Activated T-helper 2 cell treated with anti-CD3 and anti-CD28 coated beads, Interferon-gamma antibody, Interleukin-2, Interleukin-4, amounts not matched to agents 10 μg/mL and 5 μg/mL and 100 μg/mL, durations not matched to agents 14 hours and 24 hours and 36 hours (primary cell): ENCODE measurements at regions of chr12 and their contacts with region 1.

Region 1: GRCh38 chr12:27076933-27077332 is 5.4 kb downstream of the C12orf71 start:
- DNase-seq: no peak
- H3K4me3 Mint-ChIP-seq: no peak overlapping the region
- H3K27ac Mint-ChIP-seq: no peak overlapping the region
- H3K4me1 Mint-ChIP-seq: peaks cover 17% of the 10 kb centered on the region
- H3K27me3 Mint-ChIP-seq: no peaks in the 10 kb centered on the region

Region 2: GRCh38 chr12:27109334-27110028 is 32.5 kb after region 1 on chr12:
- intact Hi-C with region 1: loop called (anchors 5 kb)
- DNase-seq: no peak
- H3K4me3 Mint-ChIP-seq: no peak overlapping the region
- H3K27ac Mint-ChIP-seq: peak overlapping the region; percentile 40
- H3K4me1 Mint-ChIP-seq: peaks cover 41% of the 10 kb centered on the region
- H3K27me3 Mint-ChIP-seq: no peaks in the 10 kb centered on the region